ENCODE measurements at regions of chr14 and their contacts with region 1.

Region 1: GRCh38 chr14:69860221-69860620 is 19.0 kb upstream of the SMOC1 start:
- DNase-seq: no peak
- H3K4me3 ChIP-seq: no peak overlapping the region
- H3K27ac ChIP-seq: no peak overlapping the region
- H3K4me1 ChIP-seq: no peaks in the 10 kb centered on the region
- H3K27me3 ChIP-seq: no peaks in the 10 kb centered on the region
- CTCF ChIP-seq: no peak
- POLR2A ChIP-seq: no peak

Region 2: GRCh38 chr14:69796797-69797500 is 63.3 kb before region 1 on chr14 and contains the start of gene SLC10A1:
- intact Hi-C with region 1: no loop called
- DNase-seq: no peak
- H3K4me3 ChIP-seq: no peak within 1 kb of the TSS
- H3K27ac ChIP-seq: no peak within 1 kb of the TSS
- H3K4me1 ChIP-seq: no peaks in the 10 kb centered on the region
- H3K27me3 ChIP-seq: no peaks in the 10 kb centered on the region
- CTCF ChIP-seq: no peak
- POLR2A ChIP-seq: no peak
- total RNA-seq, gene SLC10A1: not detected

Region 3: DNA sequence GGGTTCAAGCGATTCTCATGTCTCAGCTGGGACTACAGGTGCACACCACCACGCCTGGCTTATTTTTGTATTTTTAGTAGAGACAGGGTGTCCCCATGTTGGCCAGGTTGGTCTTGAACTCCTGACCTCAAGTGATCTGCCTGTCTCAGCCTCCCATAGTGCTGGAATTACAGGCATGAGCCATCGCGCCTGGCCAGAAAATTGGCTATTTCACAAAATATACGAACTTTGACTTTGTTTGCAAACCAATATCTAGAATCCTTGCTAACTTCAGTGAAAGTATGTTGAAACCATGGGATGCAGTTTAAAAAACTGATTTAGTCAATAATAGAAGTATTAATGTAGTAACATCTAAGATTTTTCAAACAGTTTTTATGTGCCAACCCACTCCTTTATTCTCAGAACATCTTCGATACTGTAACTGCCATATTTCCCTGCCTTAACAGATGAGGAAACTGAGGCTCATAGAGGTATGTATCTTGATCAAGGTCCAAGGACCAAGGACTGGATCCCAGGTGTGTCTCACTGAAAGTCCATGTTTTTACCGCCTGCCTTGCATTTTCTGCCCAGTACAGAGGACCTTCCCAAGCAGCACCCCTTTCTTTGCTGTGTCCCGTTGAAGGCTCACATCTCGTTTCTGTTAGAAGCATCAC is 73.5 kb after region 1 on chr14:
- intact Hi-C with region 1: loop called (anchors 2 kb)
- DNase-seq: no peak
- H3K4me3 ChIP-seq: no peak overlapping the region
- H3K27ac ChIP-seq: no peak overlapping the region
- H3K4me1 ChIP-seq: no peaks in the 10 kb centered on the region
- H3K27me3 ChIP-seq: no peaks in the 10 kb centered on the region
- CTCF ChIP-seq: no peak
- POLR2A ChIP-seq: no peak

Measured in breast epithelium (tissue), 4 donors.